AG04449 (cell line): ENCODE measurements at regions of chr7 and their contacts with region 1.

Region 1: GRCh38 chr7:149195180-149196150 is at the start of gene ZNF282:
- DNase-seq: peak; percentile 46
- H3K4me3 ChIP-seq: peak within 1 kb of the TSS; percentile 85
- CTCF ChIP-seq: peak; percentile 85

Region 2: GRCh38 chr7:149180722-149181449 is 14.6 kb before region 1 on chr7:
- CTCF ChIA-PET with region 1: interaction called, 12 read pairs
- POLR2A ChIA-PET with region 1: no interaction called
- DNase-seq: no peak
- H3K4me3 ChIP-seq: no peak overlapping the region
- CTCF ChIP-seq: no peak

Region 3: GRCh38 chr7:149205711-149206393 is 10.4 kb after region 1 on chr7:
- CTCF ChIA-PET with region 1: interaction called, 20 read pairs
- POLR2A ChIA-PET with region 1: no interaction called
- DNase-seq: no peak
- H3K4me3 ChIP-seq: no peak overlapping the region
- CTCF ChIP-seq: no peak

Region 4: DNA sequence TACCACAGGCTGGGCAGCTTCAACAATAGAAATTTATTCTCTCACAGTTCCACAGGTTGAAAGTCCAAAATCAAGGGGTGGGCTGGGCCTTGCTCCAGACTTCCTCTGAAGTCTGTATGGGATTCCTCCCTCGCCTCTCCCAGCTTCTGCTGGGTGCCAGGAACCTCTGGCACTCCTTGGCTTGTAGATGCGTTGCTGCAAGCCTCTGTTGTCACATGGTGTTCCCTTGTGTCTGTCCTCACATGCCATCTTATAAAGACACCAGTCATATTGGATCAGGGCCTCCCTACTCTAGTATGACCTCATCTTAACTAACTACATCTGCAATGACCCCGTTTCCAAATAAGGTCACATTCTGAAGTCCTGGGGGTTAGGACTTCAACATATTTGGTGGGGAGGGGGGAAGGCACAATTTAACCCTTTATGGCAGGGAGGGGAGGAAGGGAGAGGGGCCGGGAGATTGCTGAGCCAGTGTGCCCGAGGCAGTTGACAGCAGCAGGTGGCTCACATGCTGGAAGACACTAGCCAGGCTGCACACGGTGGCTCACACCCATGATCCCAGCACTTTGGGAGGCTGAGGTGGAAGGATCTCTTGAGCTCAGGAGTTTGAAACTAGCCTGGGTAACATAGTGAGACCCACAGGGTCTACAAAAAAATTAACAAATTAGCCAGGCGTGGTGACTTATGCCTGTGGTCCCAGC is 18.7 kb after region 1 on chr7:
- CTCF ChIA-PET with region 1: interaction called, 11 read pairs
- POLR2A ChIA-PET with region 1: interaction called, 4 read pairs
- DNase-seq: no peak
- H3K4me3 ChIP-seq: no peak overlapping the region
- CTCF ChIP-seq: no peak

Region 5: DNA sequence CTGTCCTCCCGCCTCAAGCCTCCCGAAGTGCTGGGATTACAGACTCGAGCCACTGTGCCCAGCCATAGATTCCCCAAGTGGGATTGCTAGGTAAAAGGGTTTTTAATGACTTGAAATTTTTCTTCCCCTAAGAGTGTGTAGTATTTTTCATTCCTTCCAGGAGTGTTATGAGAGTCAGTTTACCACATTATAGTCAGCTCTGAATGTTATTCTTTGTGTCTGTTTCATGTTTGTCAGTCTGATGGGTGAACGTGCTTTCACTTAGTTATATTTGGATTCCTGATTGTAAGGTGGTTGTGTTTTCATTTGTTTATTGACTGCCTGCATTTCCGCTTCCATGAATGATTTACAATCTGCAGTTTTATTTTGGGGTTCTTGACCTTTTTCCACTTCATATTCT is 50.3 kb after region 1 on chr7:
- CTCF ChIA-PET with region 1: no interaction called
- POLR2A ChIA-PET with region 1: no interaction called
- DNase-seq: no peak
- H3K4me3 ChIP-seq: no peak overlapping the region
- CTCF ChIP-seq: no peak